Naive thymus-derived CD4-positive, alpha-beta T cell (primary cell): ENCODE measurements at regions of chr7 and their contacts with region 1.

Region 1: GRCh38 chr7:35037526-35038339 is 448 bp upstream of the DPY19L1 start:
- DNase-seq: peak; percentile 64 to 93 (median 81)
- ATAC-seq: peak; percentile 83
- H3K4me3 ChIP-seq: peak overlapping the region; percentile 68
- H3K4me3 Mint-ChIP-seq: peak overlapping the region; percentile 77 to 96 (median 89)
- H3K27ac ChIP-seq: peak overlapping the region; percentile 61
- H3K27ac Mint-ChIP-seq: peak overlapping the region; percentile 11 to 90 (median 73)
- H3K4me1 ChIP-seq: peaks cover 17% of the 10 kb centered on the region in 2 donors
- H3K4me1 Mint-ChIP-seq: peaks cover 19 to 38% (median 30%) of the 10 kb centered on the region in 7 donors
- H3K27me3 ChIP-seq: no peaks in the 10 kb centered on the region
- H3K27me3 Mint-ChIP-seq: peaks cover 0 to 21% (median 0%) of the 10 kb centered on the region in 5 donors

Region 2: DNA sequence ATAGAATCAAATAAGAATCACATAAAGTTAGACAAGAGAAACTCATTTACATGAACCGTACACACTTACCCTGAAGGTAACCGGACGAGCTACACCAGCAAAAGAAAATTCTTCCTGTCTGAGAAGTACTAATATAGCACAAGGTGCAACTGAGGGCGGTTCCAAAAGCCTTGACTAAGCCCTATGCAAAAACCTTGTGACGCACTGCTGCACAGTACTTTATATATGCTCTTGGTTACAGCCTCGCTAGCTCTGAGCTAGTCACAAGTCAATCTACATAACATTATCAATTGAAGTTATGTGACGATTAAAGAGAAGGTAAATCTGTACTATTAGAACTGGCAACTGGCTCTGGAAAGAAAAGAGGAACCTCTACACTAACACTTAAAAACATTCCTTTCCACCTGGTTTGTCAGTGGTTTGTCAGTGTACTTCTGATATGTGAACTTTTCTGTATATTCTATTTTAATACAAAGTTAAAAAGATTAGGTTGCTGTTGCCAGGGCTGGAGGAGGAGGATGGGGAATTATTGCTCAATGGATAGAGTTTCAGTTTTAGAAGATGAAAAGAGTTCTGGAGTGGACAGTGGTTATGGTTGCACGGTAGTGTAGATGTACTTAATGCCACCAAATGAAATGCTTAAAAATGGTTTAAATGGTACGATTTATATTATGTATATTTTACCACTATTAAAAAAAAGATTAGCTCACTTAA is 1996.8 kb before region 1 on chr7:
- CTCF ChIA-PET with region 1: no interaction called
- POLR2A ChIA-PET with region 1: no interaction called
- intact Hi-C with region 1: loop called in 1 of 2 experiments (anchors 10 kb)
- DNase-seq: peak in 8 of 9 donors; percentile 44 to 90 (median 78)
- ATAC-seq: peak; percentile 99
- H3K4me3 ChIP-seq: peak overlapping the region; percentile 40
- H3K4me3 Mint-ChIP-seq: peak overlapping the region; percentile 71 to 89 (median 84)
- H3K27ac ChIP-seq: peak overlapping the region; percentile 80
- H3K27ac Mint-ChIP-seq: peak overlapping the region; percentile 75 to 95 (median 90)
- H3K4me1 ChIP-seq: peaks cover 3 to 22% of the 10 kb centered on the region in 2 donors
- H3K4me1 Mint-ChIP-seq: peaks cover 18 to 72% (median 65%) of the 10 kb centered on the region in 7 donors
- H3K27me3 ChIP-seq: no peaks in the 10 kb centered on the region
- H3K27me3 Mint-ChIP-seq: no peaks in the 10 kb centered on the region

Region 3: DNA sequence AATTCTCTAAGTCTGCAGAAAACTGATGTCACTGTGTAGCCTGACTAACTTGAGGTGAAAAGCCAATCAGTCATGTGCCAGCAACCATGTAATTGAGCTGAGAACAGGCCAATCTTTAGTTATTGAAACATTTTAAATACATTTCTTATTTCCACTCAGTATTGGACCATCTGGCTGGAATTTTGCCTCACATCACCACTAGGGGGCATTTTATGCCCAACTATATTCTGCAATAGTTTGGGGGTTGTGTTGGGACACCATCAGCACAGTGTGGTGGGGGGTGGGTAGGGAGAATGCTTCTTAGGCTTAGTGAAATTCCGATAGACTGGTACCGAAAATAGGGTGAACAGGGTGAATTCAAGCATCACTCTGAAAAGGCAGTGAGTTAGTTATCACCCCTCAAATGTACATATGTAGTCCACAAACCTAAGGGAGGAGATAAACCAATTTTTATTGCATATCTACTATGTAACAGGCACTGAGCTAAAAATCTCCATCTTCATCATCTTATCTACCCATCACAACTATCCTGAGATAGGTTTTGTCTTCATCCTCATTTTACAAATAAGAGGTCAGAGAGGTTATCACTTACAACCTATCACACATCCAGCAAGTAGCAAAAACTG is 361.9 kb before region 1 on chr7:
- CTCF ChIA-PET with region 1: no interaction called
- POLR2A ChIA-PET with region 1: no interaction called
- intact Hi-C with region 1: loop called in 1 of 2 experiments (anchors 5 kb)
- DNase-seq: no peak
- ATAC-seq: no peak
- H3K4me3 ChIP-seq: no peak overlapping the region
- H3K4me3 Mint-ChIP-seq: no peak overlapping the region
- H3K27ac ChIP-seq: no peak overlapping the region
- H3K27ac Mint-ChIP-seq: no peak overlapping the region
- H3K4me1 ChIP-seq: no peaks in the 10 kb centered on the region
- H3K4me1 Mint-ChIP-seq: no peaks in the 10 kb centered on the region
- H3K27me3 ChIP-seq: no peaks in the 10 kb centered on the region
- H3K27me3 Mint-ChIP-seq: peaks cover 0 to under 1% (median 0%) of the 10 kb centered on the region in 5 donors

Region 4: GRCh38 chr7:34991938-34992840 is 45.5 kb before region 1 on chr7:
- CTCF ChIA-PET with region 1: no interaction called
- POLR2A ChIA-PET with region 1: no interaction called
- intact Hi-C with region 1: loop called in 1 of 2 experiments (anchors 2 kb)
- DNase-seq: no peak
- ATAC-seq: peak; percentile 87
- H3K4me3 ChIP-seq: no peak overlapping the region
- H3K4me3 Mint-ChIP-seq: peak overlapping the region in 1 of 10 donors; percentile 48
- H3K27ac ChIP-seq: no peak overlapping the region
- H3K27ac Mint-ChIP-seq: peak overlapping the region in 2 of 9 donors; percentile 23 to 87
- H3K4me1 ChIP-seq: peaks cover 0 to 10% of the 10 kb centered on the region in 2 donors
- H3K4me1 Mint-ChIP-seq: peaks cover 0 to 16% (median 0%) of the 10 kb centered on the region in 7 donors
- H3K27me3 ChIP-seq: no peaks in the 10 kb centered on the region
- H3K27me3 Mint-ChIP-seq: no peaks in the 10 kb centered on the region

Region 5: DNA sequence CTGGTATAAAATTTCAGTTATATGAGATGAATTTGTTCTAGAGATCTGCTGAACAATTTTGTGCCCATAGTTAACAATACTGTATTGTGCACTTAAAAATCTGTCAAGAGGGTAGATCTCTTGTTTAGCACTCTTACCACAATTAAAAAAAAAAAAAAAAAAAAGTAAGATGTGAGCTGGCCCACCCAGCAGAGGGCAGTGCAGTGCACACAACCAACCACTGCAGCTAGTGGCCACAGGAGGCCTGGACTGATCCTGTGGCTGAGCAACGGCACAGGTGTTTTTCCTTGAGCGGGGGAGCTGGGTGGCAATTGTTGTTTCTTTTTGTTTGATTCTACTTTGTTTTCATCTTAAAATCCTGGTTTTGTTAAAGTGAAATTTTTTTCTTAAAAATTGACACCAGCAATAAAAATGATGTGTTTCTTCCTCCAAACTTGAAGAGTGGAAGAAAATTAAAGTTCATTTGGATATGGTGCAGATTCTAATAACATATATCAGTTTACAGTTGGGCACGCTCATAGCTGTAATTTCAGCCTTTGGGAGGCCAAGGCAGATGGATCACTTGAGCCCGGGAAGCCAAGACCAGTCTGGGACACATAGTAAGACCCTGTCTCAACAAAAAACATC is 387.2 kb after region 1 on chr7:
- CTCF ChIA-PET with region 1: no interaction called
- POLR2A ChIA-PET with region 1: no interaction called
- intact Hi-C with region 1: loop called in 1 of 2 experiments (anchors 2 kb)
- DNase-seq: peak in 8 of 9 donors; percentile 17 to 51 (median 42)
- ATAC-seq: peak; percentile 85
- H3K4me3 ChIP-seq: no peak overlapping the region
- H3K4me3 Mint-ChIP-seq: no peak overlapping the region
- H3K27ac ChIP-seq: no peak overlapping the region
- H3K27ac Mint-ChIP-seq: no peak overlapping the region
- H3K4me1 ChIP-seq: no peaks in the 10 kb centered on the region
- H3K4me1 Mint-ChIP-seq: peaks cover 0 to 7% (median 0%) of the 10 kb centered on the region in 7 donors
- H3K27me3 ChIP-seq: no peaks in the 10 kb centered on the region
- H3K27me3 Mint-ChIP-seq: peaks cover 0 to 35% (median 23%) of the 10 kb centered on the region in 5 donors

Region 6: DNA sequence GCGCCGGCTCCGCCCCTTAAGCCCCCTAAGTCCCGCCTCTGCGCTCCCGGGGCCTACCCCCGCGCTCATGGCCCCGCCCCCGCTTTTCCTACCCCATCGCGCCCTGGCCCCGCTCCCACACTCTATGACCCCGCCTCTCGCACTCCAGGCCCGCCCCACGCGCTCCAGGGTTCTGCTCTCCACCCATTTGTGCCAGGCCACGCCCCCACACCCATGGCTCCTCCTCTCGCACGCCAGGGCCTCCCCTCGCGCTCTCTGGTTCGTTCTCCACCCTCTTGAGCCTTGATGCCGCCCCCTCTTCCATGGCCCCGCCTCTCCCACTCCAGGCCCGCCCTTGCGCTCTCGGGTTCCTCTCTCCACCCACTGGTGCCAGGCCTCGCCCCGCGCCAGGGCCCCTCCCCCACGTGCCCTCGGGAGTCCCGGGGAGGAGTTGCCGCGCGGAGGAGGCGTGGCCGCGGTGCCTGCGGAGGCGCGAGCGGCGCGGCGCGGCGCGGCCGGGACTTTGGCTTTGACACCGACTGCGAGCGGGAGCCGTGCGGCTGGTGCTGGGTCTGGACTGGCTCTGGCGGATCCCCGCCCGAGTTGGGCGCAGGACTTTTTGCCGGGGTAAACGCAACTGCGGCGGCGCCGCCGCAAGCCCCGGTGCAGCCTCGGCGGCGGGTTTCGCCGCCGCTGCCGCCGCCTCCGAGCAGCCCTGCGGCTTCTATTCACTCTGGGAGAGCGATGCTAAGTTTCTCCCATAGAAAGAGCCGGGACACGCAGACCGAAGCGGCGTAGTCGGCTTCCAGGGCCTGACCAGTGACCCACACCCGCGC is 1115.2 kb after region 1 on chr7 and contains the start of gene EEPD1:
- CTCF ChIA-PET with region 1: no interaction called
- POLR2A ChIA-PET with region 1: no interaction called
- intact Hi-C with region 1: loop called (anchors 1 to 2 kb)
- DNase-seq: peak; percentile 99 to 100 (median 100)
- ATAC-seq: peak; percentile 96
- H3K4me3 ChIP-seq: peak within 1 kb of the TSS; percentile 72
- H3K4me3 Mint-ChIP-seq: peak within 1 kb of the TSS; percentile 70 to 93 (median 84)
- H3K27ac ChIP-seq: peak within 1 kb of the TSS; percentile 73
- H3K27ac Mint-ChIP-seq: peak within 1 kb of the TSS in 8 of 9 donors; percentile 10 to 87 (median 74)
- H3K4me1 ChIP-seq: peaks cover 7 to 16% of the 10 kb centered on the region in 2 donors
- H3K4me1 Mint-ChIP-seq: peaks cover 12 to 31% (median 24%) of the 10 kb centered on the region in 7 donors
- H3K27me3 ChIP-seq: no peaks in the 10 kb centered on the region
- H3K27me3 Mint-ChIP-seq: peaks cover 0 to 21% (median 0%) of the 10 kb centered on the region in 5 donors
- total RNA-seq, gene EEPD1: 2.2 to 13.2 (median 3.7) TPM

Region 7: GRCh38 chr7:36366718-36367560 is 1329.2 kb after region 1 on chr7:
- CTCF ChIA-PET with region 1: no interaction called
- POLR2A ChIA-PET with region 1: no interaction called
- intact Hi-C with region 1: loop called (anchors 2 to 5 kb)
- DNase-seq: peak; percentile 84 to 92 (median 91)
- ATAC-seq: peak; percentile 98
- H3K4me3 ChIP-seq: peak overlapping the region; percentile 76
- H3K4me3 Mint-ChIP-seq: peak overlapping the region; percentile 80 to 97 (median 93)
- H3K27ac ChIP-seq: peak overlapping the region; percentile 70
- H3K27ac Mint-ChIP-seq: peak overlapping the region in 8 of 9 donors; percentile 51 to 94 (median 82)
- H3K4me1 ChIP-seq: peaks cover 0 to 5% of the 10 kb centered on the region in 2 donors
- H3K4me1 Mint-ChIP-seq: peaks cover 0 to 8% (median 5%) of the 10 kb centered on the region in 7 donors
- H3K27me3 ChIP-seq: no peaks in the 10 kb centered on the region
- H3K27me3 Mint-ChIP-seq: peaks cover 0 to 57% (median 0%) of the 10 kb centered on the region in 5 donors

Region 8: DNA sequence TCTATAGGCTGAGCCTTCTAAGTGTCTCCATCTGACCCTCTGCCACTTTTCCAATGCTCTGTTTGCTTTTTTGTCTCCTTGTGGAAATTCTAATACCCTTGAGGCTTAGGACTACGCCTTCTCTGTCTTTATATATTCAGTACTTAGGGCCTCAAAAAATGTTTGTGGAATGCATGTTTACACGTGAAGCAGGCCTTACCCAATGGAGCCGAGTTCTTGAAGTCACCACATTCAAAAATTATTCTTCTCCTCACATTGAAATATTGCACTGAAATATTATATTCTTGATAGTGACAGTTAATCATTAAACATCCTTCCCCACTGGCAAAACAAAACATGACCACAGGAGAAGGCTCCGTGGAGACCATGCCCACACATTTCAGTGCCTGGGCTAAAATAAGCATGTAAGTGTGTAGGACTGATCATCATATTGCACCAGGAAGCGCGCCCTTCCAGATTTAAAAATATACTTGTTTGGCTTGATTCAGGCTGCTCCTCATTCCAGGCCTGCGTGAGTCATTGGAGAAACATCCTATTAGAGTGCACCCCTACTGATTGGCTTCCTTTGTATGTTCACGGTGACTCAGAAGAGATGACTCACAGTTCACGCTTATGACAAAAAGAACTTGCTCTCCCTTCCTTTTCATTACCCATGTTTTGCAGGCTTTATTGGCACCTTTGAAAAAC is 1994.0 kb after region 1 on chr7:
- CTCF ChIA-PET with region 1: no interaction called
- POLR2A ChIA-PET with region 1: no interaction called
- intact Hi-C with region 1: no loop called
- DNase-seq: peak in 1 of 9 donors; percentile 24
- ATAC-seq: peak; percentile 81
- H3K4me3 ChIP-seq: no peak overlapping the region
- H3K4me3 Mint-ChIP-seq: no peak overlapping the region
- H3K27ac ChIP-seq: no peak overlapping the region
- H3K27ac Mint-ChIP-seq: peak overlapping the region in 4 of 9 donors; percentile 28 to 58 (median 38)
- H3K4me1 ChIP-seq: peaks cover 0 to 8% of the 10 kb centered on the region in 2 donors
- H3K4me1 Mint-ChIP-seq: peaks cover 29 to 66% (median 50%) of the 10 kb centered on the region in 7 donors
- H3K27me3 ChIP-seq: no peaks in the 10 kb centered on the region
- H3K27me3 Mint-ChIP-seq: no peaks in the 10 kb centered on the region